Sciatic nerve (tissue), 2 donors: ENCODE measurements at regions of chr1 and their contacts with region 1.

Region 1: DNA sequence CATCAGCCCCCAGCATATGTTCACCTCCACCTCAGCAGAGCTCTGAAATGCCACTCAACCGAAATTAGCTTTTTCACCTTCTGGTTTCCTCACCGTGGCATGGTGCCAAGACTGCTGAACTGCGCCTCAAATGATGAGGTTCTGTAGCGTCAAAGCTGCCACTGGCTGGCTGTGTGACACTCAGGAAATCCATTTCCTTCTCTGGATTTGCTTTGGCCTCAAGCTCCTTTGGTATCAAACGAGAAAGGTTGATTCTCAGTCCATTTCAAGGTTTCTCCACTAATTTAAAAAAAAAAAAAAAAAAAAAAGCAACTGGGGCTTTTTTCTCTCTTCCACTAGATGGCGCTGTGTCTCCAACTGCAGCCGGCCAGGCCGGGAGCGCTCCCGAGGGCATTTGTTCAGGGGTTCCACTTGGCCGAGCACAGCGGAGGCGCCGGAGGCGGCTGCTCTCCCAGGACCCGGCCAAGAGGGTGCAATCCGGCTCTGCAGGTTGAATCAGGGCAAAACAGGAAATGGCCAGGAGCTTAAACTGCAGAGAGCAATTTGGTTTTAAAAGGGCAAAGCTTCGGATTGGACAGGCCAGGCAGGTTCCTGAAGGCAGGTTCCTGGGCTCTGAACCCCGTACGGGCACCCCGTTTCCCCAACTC is 26.5 kb upstream of the PLA2G2C start:
- DNase-seq: peak; percentile 70
- ATAC-seq: peak; percentile 68

Region 2: DNA sequence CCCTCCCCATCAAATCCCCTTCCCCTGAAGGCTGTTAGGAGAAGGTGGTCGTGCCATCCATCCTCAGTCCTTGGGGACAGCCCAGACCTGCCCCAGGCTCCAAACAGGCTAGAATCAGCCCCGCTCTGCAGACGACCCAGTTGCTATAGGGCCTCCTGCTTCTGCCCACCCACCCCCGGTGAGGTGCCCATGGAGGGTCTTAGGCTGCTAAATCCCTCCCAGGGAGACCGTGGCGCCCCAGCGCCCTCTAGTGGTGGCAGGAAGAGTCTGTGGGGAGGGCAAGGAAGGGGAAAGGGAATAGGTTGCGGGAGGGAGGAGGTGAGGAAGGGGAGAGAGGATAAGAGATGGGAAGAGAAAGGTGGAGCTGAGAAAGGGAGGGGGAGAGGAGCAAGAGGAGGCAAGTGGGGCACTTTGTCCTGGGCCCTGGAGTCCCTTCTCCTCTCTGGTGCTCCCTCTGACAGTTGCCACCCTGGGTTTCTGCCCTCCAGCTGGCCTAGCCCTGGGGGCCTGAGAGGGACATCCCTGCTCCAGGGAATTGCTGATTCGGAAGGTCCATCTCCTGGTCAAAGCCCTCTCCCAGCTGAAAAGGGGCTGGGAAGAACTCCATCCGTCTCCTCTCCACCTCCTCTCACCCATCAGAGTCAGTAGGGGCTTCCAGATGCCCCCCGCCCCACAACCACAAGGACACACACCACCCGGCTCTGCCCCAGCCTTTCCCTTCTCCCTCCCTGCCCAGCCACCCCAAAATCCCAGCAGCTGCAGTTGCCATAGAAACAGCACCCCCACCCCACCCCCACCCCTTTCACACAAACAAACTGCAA is 217.8 kb after region 1 on chr1:
- intact Hi-C with region 1: no loop called
- DNase-seq: no peak
- ATAC-seq: no peak

Region 3: DNA sequence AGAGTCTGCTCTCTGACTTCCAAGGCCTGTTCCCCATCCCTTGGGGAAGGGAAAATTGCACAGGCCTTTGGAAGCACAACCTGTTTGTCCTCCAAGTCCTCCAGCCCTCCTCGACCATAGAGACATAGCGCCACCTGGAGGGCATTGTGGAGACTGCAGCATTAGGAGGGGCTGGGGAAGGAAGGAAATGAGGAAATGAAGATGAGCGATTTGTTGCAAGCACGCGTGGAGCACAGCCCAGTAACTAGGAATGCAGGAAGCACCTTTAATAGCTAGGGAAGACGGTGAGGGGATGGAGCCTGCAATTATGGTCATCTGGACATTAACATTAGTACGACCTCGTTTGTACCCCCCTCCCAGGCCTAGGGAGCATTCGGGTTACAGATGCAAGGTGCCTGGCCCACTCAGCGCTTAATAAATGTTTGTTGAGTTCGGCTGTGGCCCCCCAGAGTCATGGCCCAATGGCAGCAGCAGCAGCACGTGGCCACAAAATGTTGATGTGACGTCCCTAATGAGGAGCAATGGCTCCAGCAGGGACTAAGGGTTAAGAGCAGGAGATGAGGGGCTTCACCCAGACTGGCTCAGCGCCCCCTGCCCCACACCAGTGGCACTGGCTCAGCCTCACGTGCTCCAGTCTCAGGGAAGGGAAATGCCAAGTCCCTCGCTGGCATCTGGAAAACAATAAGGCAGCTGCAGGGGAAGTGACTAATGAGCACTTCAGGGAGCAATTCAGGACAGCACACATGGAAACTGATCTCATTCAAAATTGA is 281.2 kb after region 1 on chr1:
- intact Hi-C with region 1: loop called (anchors 5 kb)
- DNase-seq: peak; percentile 92
- ATAC-seq: peak; percentile 90